Activated CD4-positive, alpha-beta memory T cell treated with anti-CD3 and anti-CD28 coated beads for 36 hours (primary cell): ENCODE measurements at regions of chr10 and their contacts with region 1.

Region 1: DNA sequence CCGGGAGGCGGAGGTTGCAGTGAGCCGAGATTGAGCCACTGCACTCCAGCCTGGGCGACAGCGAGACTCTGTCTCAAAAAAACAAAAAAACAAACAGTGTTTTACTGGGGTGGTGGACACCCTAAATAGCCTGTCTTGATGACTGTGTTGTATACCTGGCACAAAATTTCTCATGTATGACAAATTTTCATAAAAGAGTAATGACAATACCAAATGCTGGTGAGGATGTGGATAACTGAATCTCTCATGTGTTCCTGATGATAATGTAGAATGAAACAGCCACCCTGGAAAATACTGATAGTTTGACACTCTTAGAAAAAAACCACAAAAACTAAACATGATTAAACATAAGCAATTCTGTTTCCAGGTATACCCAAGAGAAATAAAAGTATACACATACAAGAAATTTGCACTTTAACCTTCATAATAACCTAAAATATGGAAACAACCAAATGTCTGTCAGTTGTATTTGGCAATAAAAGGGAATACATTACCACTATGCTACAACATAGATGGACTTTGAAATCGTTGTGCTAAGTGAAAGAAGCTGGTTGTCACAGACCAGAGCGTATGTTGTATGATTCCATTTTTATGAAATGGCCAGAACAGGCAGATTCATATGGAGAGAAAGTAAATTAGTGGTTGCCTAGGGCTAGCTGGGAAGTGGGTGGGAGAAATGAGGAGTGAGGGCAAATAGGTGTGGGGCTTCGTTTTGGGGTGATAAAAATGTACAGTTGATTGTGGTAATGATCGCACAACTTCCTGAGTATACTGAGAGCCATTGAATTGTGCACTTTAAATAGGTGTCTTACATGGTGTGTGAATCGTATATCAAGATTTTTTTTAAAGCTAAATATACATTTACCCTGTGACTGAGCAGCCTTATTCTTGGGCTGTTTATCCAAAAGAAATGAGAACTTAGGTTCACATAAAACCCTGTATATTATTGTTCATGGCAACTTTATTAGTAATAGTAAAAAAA is 12.5 kb downstream of the WDR37 start:
- DNase-seq: no peak
- H3K4me3 Mint-ChIP-seq: no peak overlapping the region
- H3K27ac Mint-ChIP-seq: peak overlapping the region; percentile 25
- H3K4me1 Mint-ChIP-seq: peaks cover 42% of the 10 kb centered on the region
- H3K27me3 Mint-ChIP-seq: no peaks in the 10 kb centered on the region

Region 2: GRCh38 chr10:1094112-1095057 is 25.7 kb after region 1 on chr10:
- CTCF ChIA-PET with region 1: no interaction called
- POLR2A ChIA-PET with region 1: no interaction called
- intact Hi-C with region 1: loop called (anchors 1 kb)
- DNase-seq: peak; percentile 92
- H3K4me3 Mint-ChIP-seq: no peak overlapping the region
- H3K27ac Mint-ChIP-seq: no peak overlapping the region
- H3K4me1 Mint-ChIP-seq: peaks cover 4% of the 10 kb centered on the region
- H3K27me3 Mint-ChIP-seq: no peaks in the 10 kb centered on the region

Region 3: DNA sequence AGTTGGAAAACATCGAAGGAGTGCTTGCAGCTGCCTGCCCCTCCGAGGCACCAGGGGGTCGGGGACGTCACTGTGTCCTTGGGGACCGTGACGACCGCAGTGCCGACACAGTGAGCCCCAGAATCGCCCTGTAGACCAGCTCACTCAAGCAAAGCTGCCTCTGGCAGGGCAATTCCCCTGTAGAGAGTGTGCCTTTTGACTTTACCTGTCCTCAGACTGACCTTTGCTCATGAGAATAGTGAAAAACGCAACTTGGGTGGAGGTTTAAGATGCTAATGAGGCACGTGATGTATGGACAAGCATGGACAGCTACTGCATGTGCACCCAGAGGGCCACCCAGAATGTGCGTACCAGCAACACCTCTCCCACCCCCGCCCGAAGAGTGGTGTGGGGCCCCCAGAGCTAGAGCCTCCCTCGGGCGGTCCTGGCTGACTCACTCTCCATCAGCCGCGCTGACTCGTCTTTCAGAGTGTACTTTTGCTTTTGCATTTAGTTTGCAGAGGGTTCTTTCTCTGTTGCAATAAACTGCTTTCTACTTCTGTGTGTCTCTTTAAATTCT is 396.8 kb after region 1 on chr10:
- CTCF ChIA-PET with region 1: no interaction called
- POLR2A ChIA-PET with region 1: no interaction called
- intact Hi-C with region 1: no loop called
- DNase-seq: no peak
- H3K4me3 Mint-ChIP-seq: no peak overlapping the region
- H3K27ac Mint-ChIP-seq: no peak overlapping the region
- H3K4me1 Mint-ChIP-seq: no peaks in the 10 kb centered on the region
- H3K27me3 Mint-ChIP-seq: peaks cover 8% of the 10 kb centered on the region